ENCODE measurements at regions of chr16 and their contacts with region 1.

Region 1: GRCh38 chr16:3264137-3265036 is 8.0 kb upstream of the MEFV start:
- DNase-seq: peak; percentile 93 to 96 (median 95)
- H3K4me3 ChIP-seq: peak overlapping the region; percentile 12 to 95
- H3K4me3 Mint-ChIP-seq: peak overlapping the region; percentile 88 to 98 (median 90)
- H3K27ac ChIP-seq: peak overlapping the region; percentile 92
- H3K27ac Mint-ChIP-seq: peak overlapping the region; percentile 90 to 96 (median 93)
- H3K4me1 ChIP-seq: peaks cover 25% of the 10 kb centered on the region
- H3K4me1 Mint-ChIP-seq: peaks cover 23 to 46% (median 33%) of the 10 kb centered on the region in 4 donors
- H3K27me3 ChIP-seq: no peaks in the 10 kb centered on the region
- H3K27me3 Mint-ChIP-seq: no peaks in the 10 kb centered on the region

Region 2: GRCh38 chr16:3173892-3174617 is 90.3 kb before region 1 on chr16:
- CTCF ChIA-PET with region 1: interaction called, 4 read pairs
- POLR2A ChIA-PET with region 1: interaction called, 17 read pairs
- intact Hi-C with region 1: no loop called
- DNase-seq: no peak
- H3K4me3 ChIP-seq: no peak overlapping the region
- H3K4me3 Mint-ChIP-seq: peak overlapping the region in 7 of 8 donors; percentile 4 to 58 (median 35)
- H3K27ac ChIP-seq: no peak overlapping the region
- H3K27ac Mint-ChIP-seq: peak overlapping the region in 2 of 7 donors; percentile 17 to 75
- H3K4me1 ChIP-seq: peaks cover 48% of the 10 kb centered on the region
- H3K4me1 Mint-ChIP-seq: peaks cover 18 to 46% (median 35%) of the 10 kb centered on the region in 4 donors
- H3K27me3 ChIP-seq: peaks cover 38% of the 10 kb centered on the region
- H3K27me3 Mint-ChIP-seq: peaks cover 39 to 41% of the 10 kb centered on the region in 2 donors

Region 3: DNA sequence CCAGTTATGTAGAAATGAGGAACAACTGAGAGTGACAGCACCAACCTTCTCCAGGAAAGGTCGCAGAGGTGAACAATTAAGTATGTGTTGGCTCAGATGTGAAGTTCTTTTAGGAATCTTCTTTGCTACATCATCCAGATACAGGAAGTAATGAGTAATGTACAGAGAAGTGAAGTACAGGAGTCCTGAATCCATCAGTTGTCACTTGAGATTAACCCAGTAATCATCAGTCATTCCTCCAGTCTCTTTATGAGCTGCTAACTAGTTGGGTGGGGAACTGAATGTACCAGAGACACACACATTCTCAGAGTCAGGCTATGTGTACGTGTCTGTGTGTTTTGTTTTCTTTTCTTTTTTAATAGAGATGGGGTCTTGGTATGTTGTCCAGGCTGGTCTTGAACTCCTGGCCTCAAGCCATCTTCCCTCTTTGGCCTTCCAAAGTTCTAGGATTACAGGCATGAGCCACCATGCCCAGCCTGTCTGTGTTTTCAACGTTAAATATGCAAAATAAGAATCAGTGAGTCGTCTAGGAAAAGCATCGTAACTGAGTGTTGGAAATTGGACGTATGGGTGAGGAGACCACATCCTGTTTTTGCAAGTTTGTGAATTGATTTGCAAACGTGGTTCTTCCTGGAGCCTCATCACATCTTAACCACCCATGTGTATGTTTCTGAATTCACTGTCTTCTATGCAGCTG is 49.3 kb before region 1 on chr16:
- CTCF ChIA-PET with region 1: interaction called, 9 read pairs
- POLR2A ChIA-PET with region 1: interaction called, 30 read pairs
- intact Hi-C with region 1: loop called (anchors 1 kb)
- DNase-seq: peak; percentile 75 to 86 (median 83)
- H3K4me3 ChIP-seq: peak overlapping the region in 1 of 2 donors; percentile 37
- H3K4me3 Mint-ChIP-seq: peak overlapping the region; percentile 56 to 84 (median 81)
- H3K27ac ChIP-seq: peak overlapping the region; percentile 50
- H3K27ac Mint-ChIP-seq: peak overlapping the region; percentile 95 to 100 (median 97)
- H3K4me1 ChIP-seq: peaks cover 34% of the 10 kb centered on the region
- H3K4me1 Mint-ChIP-seq: peaks cover 30 to 41% (median 35%) of the 10 kb centered on the region in 4 donors
- H3K27me3 ChIP-seq: no peaks in the 10 kb centered on the region
- H3K27me3 Mint-ChIP-seq: no peaks in the 10 kb centered on the region

Region 4: GRCh38 chr16:3276679-3277078 is 12.3 kb after region 1 on chr16:
- CTCF ChIA-PET with region 1: interaction called, 14 read pairs
- POLR2A ChIA-PET with region 1: interaction called, 80 read pairs
- intact Hi-C with region 1: no loop called
- DNase-seq: no peak
- H3K4me3 ChIP-seq: no peak overlapping the region
- H3K4me3 Mint-ChIP-seq: no peak overlapping the region
- H3K27ac ChIP-seq: no peak overlapping the region
- H3K27ac Mint-ChIP-seq: peak overlapping the region in 1 of 7 donors; percentile 42
- H3K4me1 ChIP-seq: no peaks in the 10 kb centered on the region
- H3K4me1 Mint-ChIP-seq: peaks cover 0 to 3% (median 0%) of the 10 kb centered on the region in 4 donors
- H3K27me3 ChIP-seq: no peaks in the 10 kb centered on the region
- H3K27me3 Mint-ChIP-seq: peaks cover 0 to 4% of the 10 kb centered on the region in 2 donors

Region 5: DNA sequence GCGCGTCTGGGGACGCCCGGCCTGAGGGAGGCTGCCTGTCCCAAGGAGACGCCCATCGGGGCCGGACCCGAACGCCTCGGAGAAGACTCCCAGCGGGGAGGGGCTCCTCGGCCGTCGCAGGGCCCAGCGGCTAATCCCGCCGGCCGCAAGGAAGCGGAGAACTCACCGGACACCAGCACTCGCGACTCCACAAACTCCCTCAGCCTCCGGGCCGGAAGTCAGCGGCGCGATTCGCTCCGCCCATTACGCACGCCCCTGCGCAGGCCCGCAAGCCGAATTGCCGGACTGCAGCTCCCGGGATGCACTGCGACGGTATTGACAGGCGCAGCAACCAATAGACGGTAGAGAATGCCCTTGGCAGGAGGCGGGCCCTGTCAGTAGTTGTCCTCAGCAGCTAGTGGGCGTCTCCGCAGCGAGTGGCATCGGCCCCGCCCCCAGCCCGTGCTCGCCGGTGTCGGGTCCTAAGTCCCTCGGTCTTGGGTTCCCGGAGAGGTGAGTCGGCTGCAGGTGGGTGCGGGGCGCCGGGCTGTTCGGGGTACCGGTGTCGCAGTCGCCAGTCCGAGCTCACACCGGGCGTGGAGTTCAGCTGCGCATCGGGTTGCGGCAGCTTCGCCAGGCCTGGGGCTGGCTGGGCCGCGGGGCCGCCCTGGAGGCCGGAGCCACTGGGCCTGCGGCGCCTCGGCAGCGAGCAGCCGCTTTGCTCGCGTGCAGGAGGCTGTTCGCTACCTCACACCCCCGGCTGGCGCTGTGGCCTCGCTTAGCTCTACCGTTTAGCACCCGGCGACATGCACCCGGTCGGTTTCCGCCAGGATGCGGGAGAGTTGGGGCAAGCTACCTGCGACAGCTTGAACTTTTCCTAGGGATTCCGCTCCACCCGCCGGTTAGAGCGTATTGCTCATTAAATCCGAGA is 136.6 kb after region 1 on chr16 and contains the starts of genes ZNF174 and ZSCAN32:
- CTCF ChIA-PET with region 1: no interaction called
- POLR2A ChIA-PET with region 1: interaction called, 27 read pairs
- intact Hi-C with region 1: loop called (anchors 1 kb)
- DNase-seq: peak; percentile 98 to 99 (median 99)
- H3K4me3 ChIP-seq: peak within 1 kb of the TSS; percentile 72 to 79
- H3K4me3 Mint-ChIP-seq: peak within 1 kb of the TSS; percentile 90 to 98 (median 94)
- H3K27ac ChIP-seq: peak within 1 kb of the TSS; percentile 69
- H3K27ac Mint-ChIP-seq: peak within 1 kb of the TSS; percentile 85 to 95 (median 90)
- H3K4me1 ChIP-seq: peaks cover 34% of the 10 kb centered on the region
- H3K4me1 Mint-ChIP-seq: peaks cover 36 to 68% (median 52%) of the 10 kb centered on the region in 4 donors
- H3K27me3 ChIP-seq: no peaks in the 10 kb centered on the region
- H3K27me3 Mint-ChIP-seq: no peaks in the 10 kb centered on the region
- total RNA-seq, gene ZNF174: 17.9 to 18.0 TPM
- total RNA-seq, gene ZSCAN32: 26.8 to 28.8 TPM

Region 6: GRCh38 chr16:3467921-3468320 is 203.5 kb after region 1 on chr16:
- CTCF ChIA-PET with region 1: no interaction called
- POLR2A ChIA-PET with region 1: no interaction called
- intact Hi-C with region 1: no loop called
- DNase-seq: no peak
- H3K4me3 ChIP-seq: no peak overlapping the region
- H3K4me3 Mint-ChIP-seq: no peak overlapping the region
- H3K27ac ChIP-seq: no peak overlapping the region
- H3K27ac Mint-ChIP-seq: peak overlapping the region; percentile 33 to 77 (median 67)
- H3K4me1 ChIP-seq: peaks cover 26% of the 10 kb centered on the region
- H3K4me1 Mint-ChIP-seq: peaks cover 33 to 79% (median 46%) of the 10 kb centered on the region in 4 donors
- H3K27me3 ChIP-seq: no peaks in the 10 kb centered on the region
- H3K27me3 Mint-ChIP-seq: no peaks in the 10 kb centered on the region

Region 7: DNA sequence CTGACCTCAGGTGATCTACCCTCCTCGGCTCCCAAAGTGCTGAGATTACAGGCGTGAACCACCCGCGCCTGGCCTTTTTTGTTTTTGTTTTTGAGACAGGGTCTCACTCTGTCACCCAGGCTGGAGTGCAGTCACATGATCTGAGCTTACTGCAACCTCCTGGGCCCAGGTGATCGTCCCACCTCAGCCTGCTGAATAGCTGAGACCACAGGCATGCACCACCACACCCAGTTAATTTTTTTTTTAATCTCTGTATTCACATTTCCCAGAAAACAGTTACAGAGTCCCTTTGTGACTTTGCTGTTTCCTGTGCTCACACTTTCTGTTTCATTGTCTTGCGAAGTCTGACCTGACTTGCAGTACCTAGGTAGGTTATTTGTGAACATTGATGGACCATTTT is 239.1 kb after region 1 on chr16:
- CTCF ChIA-PET with region 1: no interaction called
- POLR2A ChIA-PET with region 1: interaction called, 12 read pairs
- intact Hi-C with region 1: loop called (anchors 1 kb)
- DNase-seq: peak; percentile 61 to 76 (median 67)
- H3K4me3 ChIP-seq: peak overlapping the region in 1 of 2 donors; percentile 12
- H3K4me3 Mint-ChIP-seq: peak overlapping the region; percentile 68 to 84 (median 79)
- H3K27ac ChIP-seq: peak overlapping the region; percentile 4
- H3K27ac Mint-ChIP-seq: peak overlapping the region; percentile 88 to 95 (median 93)
- H3K4me1 ChIP-seq: peaks cover 65% of the 10 kb centered on the region
- H3K4me1 Mint-ChIP-seq: peaks cover 45 to 74% (median 55%) of the 10 kb centered on the region in 4 donors
- H3K27me3 ChIP-seq: no peaks in the 10 kb centered on the region
- H3K27me3 Mint-ChIP-seq: no peaks in the 10 kb centered on the region